ENCODE measurements at regions of chr10 and their contacts with region 1.

Region 1: DNA sequence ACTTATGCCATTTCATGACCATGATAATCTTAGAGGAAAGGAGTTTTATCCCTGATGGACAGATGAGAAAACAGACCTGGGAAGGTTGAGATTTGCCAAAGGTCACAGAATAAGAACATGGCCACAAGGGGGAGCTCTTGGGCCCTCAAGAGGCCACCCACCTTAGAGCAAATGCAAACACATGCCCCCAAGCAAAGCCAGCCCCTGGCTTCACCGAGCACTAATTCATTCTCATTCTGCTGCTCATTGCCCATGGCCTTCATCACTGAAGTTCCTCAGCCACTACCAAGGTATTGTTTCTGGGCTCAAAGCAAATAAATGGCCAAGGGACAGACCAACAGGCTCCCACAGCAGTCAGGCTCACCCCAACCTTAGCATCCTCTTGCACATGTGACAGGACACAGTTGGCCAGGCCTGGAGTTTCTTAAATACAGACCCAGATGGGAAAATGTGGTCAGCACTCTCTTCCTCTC is 44.2 kb downstream of the PDLIM1 start:
- DNase-seq: no peak

Region 2: GRCh38 chr10:94936721-94937120 is 309.9 kb before region 1 on chr10:
- intact Hi-C with region 1: no loop called
- DNase-seq: no peak

Region 3: GRCh38 chr10:95290461-95291364 is 44.1 kb after region 1 on chr10 and contains the start of gene PDLIM1:
- intact Hi-C with region 1: loop called in 1 of 2 experiments (anchors 5 kb)
- DNase-seq: peak; percentile 94
- total RNA-seq, gene PDLIM1: 133 to 134 TPM

Region 4: DNA sequence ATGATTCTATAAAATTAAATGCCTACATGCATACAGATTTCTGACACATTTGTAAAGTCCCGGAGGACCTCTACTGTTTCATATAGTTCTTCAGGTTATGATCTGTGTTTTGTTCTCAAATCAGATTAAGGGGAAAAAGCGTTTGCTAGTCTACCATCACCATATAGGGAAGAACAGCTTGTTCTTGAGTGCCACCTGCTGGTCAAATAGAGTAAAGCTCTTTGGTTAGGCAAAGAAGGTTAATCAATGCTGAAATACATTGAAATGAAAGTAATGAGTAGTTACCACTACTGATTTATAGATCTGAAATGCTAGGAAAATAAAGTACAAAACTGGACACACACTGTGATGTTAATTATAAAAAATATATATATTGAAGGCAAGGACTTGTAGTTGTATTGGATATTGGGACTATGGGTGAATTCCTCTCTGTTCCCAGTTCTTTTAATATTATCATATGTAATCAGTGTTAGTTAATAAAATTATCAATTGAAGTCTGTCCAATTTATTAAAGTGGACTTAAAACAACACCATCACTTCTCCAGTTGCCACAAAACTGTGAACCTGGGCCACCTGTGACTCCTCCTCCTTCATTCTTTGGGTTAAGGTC is 116.8 kb after region 1 on chr10:
- intact Hi-C with region 1: loop called (anchors 5 to 10 kb)
- DNase-seq: no peak

Measured in posterior vena cava (tissue), 2 donors.